CD4-positive, alpha-beta T cell (primary cell): ENCODE measurements at regions of chr17 and their contacts with region 1.

Region 1: DNA sequence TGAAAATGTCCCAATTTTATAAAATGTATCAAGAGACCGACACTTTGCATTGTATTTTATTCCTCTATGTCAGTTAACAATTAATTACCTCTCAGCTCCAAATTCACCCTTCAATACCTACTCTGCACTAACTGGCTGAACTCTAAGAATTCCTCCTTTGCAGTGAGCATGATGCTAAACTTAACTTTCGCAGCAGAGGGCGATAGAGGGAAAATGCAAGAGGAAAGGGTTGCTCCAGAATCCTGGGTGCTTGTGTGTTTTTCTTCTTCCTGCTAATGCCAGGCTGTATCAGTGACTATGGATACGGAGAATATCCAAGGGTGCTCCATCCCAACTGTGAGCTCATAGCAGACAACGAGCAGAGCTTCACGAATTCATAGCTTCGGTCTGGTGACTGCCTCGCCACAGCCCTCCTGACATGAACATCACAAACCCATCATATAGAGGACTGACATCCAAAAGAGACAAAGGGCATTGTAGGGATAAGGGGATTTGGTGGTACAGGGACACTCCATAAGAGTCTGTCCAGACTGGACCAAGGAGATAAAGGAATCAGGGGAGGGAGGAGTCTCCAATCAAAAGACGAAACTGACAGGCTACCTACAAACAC is 172.9 kb downstream of the STX8 start:
- DNase-seq: peak in 7 of 14 experiments; percentile 3 to 41 (median 13)
- ATAC-seq: no peak
- H3K4me3 ChIP-seq: no peak overlapping the region
- H3K4me3 Mint-ChIP-seq: no peak overlapping the region
- H3K27ac ChIP-seq: no peak overlapping the region
- H3K27ac Mint-ChIP-seq: no peak overlapping the region
- H3K4me1 ChIP-seq: no peaks in the 10 kb centered on the region
- H3K4me1 Mint-ChIP-seq: no peaks in the 10 kb centered on the region
- H3K27me3 ChIP-seq: no peaks in the 10 kb centered on the region
- H3K27me3 Mint-ChIP-seq: no peaks in the 10 kb centered on the region
- CTCF ChIP-seq: peak; percentile 52

Region 2: DNA sequence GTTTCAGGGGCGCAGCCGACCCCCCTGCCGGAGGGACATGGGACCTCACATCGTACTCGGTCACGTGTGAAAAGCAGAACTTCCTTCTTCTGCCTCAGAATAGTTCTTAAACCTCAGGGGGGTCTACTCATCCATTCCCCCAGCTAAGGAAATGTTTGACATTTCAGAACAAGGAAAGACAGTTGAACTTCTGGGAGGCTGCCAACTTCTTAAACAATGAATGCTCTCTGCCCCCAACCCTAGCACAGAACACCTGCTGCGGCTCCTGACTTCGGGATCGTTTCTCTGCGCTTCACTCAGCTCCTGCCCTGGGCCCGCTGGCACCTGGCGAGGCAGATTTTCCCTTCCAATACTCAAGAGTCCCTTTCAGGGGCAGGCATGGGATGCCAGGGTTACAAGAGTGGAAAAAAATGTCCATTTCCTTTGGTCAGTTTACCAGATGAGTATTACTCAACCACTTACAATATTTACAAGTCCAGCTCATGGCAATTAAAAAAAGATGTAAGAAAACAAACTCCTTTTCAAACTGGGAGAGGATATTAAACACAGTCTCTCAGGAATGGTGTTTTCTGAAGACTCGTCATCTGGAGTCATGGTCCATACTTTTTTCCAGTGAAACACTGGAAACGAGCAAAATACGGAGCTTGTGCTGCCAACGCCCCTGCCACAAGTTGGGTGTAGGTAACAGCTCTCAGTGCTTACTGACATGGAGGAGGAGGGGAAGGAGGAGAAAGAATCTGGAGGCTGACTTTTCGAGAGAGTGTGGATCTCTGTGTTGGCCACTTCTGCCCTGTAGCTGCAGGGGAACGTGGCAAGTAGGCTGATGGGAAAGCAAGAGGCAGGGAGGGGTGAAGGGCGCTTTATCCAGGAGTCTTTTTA is 145.7 kb before region 1 on chr17:
- CTCF ChIA-PET with region 1: no interaction called
- POLR2A ChIA-PET with region 1: no interaction called
- intact Hi-C with region 1: no loop called
- DNase-seq: no peak
- ATAC-seq: no peak
- H3K4me3 ChIP-seq: no peak overlapping the region
- H3K4me3 Mint-ChIP-seq: no peak overlapping the region
- H3K27ac ChIP-seq: no peak overlapping the region
- H3K27ac Mint-ChIP-seq: no peak overlapping the region
- H3K4me1 ChIP-seq: peaks cover 14% of the 10 kb centered on the region
- H3K4me1 Mint-ChIP-seq: peaks cover 58% of the 10 kb centered on the region
- H3K27me3 ChIP-seq: no peaks in the 10 kb centered on the region
- H3K27me3 Mint-ChIP-seq: no peaks in the 10 kb centered on the region
- CTCF ChIP-seq: no peak

Region 3: DNA sequence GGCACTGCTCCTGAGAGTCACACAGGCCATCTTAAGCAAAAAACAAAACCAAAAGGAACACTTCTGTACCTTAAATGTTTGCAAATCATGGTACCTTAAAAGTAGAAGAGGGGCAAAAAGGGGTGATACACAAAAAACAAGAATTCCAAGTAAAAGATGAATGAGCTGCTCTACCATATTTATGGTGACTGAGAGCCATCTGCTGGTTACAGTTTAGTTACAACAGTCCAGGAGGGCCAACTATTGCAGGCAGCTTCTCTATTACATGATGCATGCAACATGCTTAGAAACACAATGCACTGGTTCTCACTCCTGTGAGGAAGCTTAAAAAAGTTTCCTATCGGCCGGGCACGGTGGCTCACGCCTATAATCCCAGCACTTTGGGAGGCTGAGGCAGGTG is 119.4 kb after region 1 on chr17:
- CTCF ChIA-PET with region 1: no interaction called
- POLR2A ChIA-PET with region 1: no interaction called
- intact Hi-C with region 1: loop called (anchors 2 to 5 kb)
- DNase-seq: peak in 3 of 14 experiments; percentile 33 to 40 (median 36)
- ATAC-seq: no peak
- H3K4me3 ChIP-seq: no peak overlapping the region
- H3K4me3 Mint-ChIP-seq: no peak overlapping the region
- H3K27ac ChIP-seq: no peak overlapping the region
- H3K27ac Mint-ChIP-seq: no peak overlapping the region
- H3K4me1 ChIP-seq: peaks cover 10% of the 10 kb centered on the region
- H3K4me1 Mint-ChIP-seq: peaks cover 26% of the 10 kb centered on the region
- H3K27me3 ChIP-seq: no peaks in the 10 kb centered on the region
- H3K27me3 Mint-ChIP-seq: no peaks in the 10 kb centered on the region
- CTCF ChIP-seq: peak; percentile 27